ENCODE measurements at regions of chr15 and their contacts with region 1.

Region 1: GRCh38 chr15:93997084-93997918 is 234.1 kb upstream of the MCTP2 start:
- DNase-seq: no peak
- H3K4me3 Mint-ChIP-seq: no peak overlapping the region
- H3K27ac Mint-ChIP-seq: no peak overlapping the region
- H3K4me1 Mint-ChIP-seq: no peaks in the 10 kb centered on the region
- H3K27me3 Mint-ChIP-seq: no peaks in the 10 kb centered on the region

Region 2: GRCh38 chr15:93703092-93703739 is 294.1 kb before region 1 on chr15:
- CTCF ChIA-PET with region 1: no interaction called
- POLR2A ChIA-PET with region 1: no interaction called
- intact Hi-C with region 1: no loop called
- DNase-seq: no peak
- H3K4me3 Mint-ChIP-seq: no peak overlapping the region
- H3K27ac Mint-ChIP-seq: no peak overlapping the region
- H3K4me1 Mint-ChIP-seq: no peaks in the 10 kb centered on the region
- H3K27me3 Mint-ChIP-seq: no peaks in the 10 kb centered on the region

Region 3: DNA sequence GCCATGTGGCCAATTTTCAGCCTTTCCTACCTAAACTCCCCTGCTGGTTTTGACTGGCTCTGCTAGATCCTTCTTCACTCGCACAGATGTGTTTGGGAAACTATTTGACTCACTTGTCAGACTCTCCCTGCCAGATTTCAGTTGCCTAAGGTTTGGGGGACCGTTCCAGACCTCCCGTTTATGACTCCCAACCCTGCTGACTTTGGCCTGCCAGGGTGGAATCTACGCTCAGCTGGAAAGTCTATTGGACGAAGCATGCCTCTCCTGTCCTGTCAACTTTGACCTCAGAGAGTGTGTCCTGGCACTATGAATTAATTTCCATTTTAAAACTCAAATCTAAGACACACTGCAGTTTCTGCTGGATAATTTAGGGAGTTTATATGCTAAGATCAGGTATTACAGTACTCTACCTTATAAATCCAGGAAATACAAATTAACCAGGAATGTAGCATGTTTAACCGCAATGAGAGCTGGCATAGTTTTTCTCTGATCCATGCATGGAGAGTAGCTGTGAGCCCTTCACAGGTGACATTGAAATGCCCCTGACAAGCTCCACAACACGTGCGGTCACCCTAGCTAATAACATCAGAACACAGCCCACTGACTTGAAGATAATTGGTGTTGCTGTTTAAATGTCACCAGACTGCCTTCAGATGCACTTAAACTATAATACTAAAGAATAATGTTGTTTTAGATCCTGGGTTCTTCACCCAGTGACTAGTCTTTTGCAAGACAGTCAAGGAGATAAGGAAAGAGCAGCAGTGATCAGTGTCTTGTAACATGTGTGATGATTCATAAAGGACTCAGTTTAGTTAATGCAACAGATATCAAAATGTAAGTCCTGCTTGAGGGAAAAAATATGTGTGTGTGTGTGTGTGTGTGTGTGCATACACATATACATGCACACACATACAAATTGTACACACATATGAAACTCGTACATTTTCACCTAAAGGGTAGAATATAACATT is 11.1 kb after region 1 on chr15:
- CTCF ChIA-PET with region 1: interaction called, 11 read pairs
- POLR2A ChIA-PET with region 1: no interaction called
- intact Hi-C with region 1: no loop called
- DNase-seq: no peak
- H3K4me3 Mint-ChIP-seq: no peak overlapping the region
- H3K27ac Mint-ChIP-seq: no peak overlapping the region
- H3K4me1 Mint-ChIP-seq: peaks cover 6% of the 10 kb centered on the region
- H3K27me3 Mint-ChIP-seq: peaks cover 3% of the 10 kb centered on the region

Region 4: DNA sequence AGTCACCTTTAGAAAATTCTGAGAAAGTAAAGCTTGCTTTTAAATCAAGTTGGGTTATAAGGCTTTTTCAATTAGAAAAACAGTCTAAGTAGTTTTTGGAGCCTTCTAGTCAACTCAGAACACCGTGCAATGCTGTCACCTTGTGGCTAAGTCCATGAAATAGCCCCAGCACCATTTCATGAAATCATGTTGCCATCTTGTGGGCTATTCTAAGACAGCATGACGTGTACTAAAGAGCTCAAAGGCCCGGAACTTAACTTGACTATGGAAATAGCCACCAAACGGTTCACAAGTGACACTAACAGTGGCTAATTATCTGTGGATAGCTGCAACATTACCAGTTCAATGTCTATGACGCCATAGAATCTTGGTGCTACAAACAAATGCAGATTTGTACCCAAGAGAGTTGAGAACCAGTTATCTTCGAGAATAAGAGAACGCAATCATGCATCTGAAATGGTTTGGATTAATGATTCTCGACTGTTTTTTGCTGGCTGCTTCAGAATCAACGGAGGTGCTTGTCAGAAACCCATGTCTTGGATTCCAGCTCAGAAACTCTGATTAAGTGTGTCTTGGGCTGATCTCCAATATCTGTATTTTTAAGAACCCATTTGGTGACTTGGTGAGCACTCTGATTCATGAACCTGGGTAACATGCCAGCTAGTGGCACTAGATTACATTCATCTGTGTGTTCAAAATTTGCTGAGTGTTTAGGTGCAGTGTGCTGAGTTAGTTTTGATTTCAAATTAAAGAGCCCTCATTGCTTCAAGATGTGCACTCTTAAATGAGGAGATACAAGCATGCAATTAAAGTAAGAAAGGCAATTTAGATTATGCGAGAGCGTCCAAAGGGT is 122.8 kb after region 1 on chr15:
- CTCF ChIA-PET with region 1: interaction called, 13 read pairs
- POLR2A ChIA-PET with region 1: no interaction called
- intact Hi-C with region 1: loop called (anchors 1 kb)
- DNase-seq: peak; percentile 65
- H3K4me3 Mint-ChIP-seq: no peak overlapping the region
- H3K27ac Mint-ChIP-seq: no peak overlapping the region
- H3K4me1 Mint-ChIP-seq: no peaks in the 10 kb centered on the region
- H3K27me3 Mint-ChIP-seq: no peaks in the 10 kb centered on the region

Region 5: DNA sequence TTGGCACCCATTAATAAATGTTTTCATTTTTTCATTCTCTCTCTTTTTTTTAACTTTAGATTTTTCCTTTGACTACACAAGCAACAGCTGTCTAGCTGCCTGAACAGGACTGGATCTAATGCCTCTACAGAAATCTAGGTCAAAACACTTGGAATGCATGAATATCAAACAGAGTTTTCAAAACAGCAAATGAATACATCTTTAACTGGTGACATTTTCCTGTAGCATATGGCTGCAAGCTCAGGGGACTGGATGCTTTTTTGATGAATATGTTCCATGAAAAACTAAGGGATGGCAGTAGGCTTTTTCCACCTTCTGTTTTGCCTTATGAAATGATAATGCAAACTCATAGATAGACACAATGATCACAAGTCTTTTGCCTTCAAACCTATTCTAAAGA is 895.8 kb after region 1 on chr15:
- CTCF ChIA-PET with region 1: no interaction called
- POLR2A ChIA-PET with region 1: no interaction called
- intact Hi-C with region 1: no loop called
- DNase-seq: no peak
- H3K4me3 Mint-ChIP-seq: no peak overlapping the region
- H3K27ac Mint-ChIP-seq: no peak overlapping the region
- H3K4me1 Mint-ChIP-seq: no peaks in the 10 kb centered on the region
- H3K27me3 Mint-ChIP-seq: no peaks in the 10 kb centered on the region